ENCODE measurements at regions of chr11 and their contacts with region 1.

Region 1: DNA sequence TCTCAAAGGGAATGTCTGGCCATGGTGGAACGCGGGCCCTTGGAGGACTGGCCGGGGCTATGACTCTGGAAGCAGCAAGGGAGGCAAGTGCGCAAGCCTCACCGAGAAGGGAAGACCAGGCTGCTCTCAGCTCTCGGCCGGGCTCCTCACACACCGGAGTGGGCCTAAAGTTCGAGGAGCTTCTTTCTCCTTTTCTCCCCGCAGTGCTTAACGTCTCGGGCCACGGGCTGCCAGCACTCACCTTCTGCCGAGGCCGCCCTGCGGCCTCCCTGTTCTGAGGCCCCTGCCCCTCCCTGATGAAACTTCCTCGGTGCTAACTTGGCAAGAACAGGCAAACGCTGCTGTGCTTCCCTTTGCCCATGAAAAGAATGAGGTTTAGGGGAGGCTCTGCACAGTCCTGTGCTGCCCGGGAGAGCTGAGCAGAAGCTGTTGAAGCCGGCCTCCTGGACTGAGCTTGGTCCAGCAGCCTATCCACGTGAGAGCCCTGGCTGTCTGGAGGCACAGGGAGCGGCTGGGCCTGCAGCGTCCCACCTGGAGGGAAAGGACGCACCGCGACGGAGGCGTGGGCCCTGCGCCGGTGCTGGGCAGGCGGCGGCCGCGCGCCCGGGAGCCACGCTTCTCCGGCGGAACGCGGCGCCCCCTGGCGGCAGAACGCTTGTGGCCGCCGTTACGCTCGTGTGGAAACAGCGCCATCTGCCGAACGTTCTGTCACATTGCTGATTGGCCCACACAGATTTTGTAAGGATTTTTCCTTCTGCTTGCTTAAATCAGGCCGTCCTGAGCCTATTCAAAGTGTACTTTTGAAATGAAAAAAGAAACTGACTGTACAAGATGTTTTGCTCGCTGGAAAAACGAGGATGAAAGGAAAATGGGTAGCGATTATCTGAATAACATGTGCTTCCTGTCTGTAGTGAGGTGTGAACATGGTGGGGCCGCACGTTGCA is 65.0 kb upstream of the TMEM45B start:
- DNase-seq: peak; percentile 74
- H3K4me3 ChIP-seq: peak overlapping the region; percentile 23
- H3K27ac ChIP-seq: no peak overlapping the region
- H3K4me1 ChIP-seq: no peaks in the 10 kb centered on the region
- H3K27me3 ChIP-seq: peaks cover 2% of the 10 kb centered on the region
- CTCF ChIP-seq: peak; percentile 99

Region 2: GRCh38 chr11:128116885-128117284 is 1633.7 kb before region 1 on chr11:
- intact Hi-C with region 1: no loop called
- DNase-seq: no peak
- H3K4me3 ChIP-seq: no peak overlapping the region
- H3K27ac ChIP-seq: no peak overlapping the region
- H3K4me1 ChIP-seq: no peaks in the 10 kb centered on the region
- H3K27me3 ChIP-seq: no peaks in the 10 kb centered on the region
- CTCF ChIP-seq: no peak

Region 3: DNA sequence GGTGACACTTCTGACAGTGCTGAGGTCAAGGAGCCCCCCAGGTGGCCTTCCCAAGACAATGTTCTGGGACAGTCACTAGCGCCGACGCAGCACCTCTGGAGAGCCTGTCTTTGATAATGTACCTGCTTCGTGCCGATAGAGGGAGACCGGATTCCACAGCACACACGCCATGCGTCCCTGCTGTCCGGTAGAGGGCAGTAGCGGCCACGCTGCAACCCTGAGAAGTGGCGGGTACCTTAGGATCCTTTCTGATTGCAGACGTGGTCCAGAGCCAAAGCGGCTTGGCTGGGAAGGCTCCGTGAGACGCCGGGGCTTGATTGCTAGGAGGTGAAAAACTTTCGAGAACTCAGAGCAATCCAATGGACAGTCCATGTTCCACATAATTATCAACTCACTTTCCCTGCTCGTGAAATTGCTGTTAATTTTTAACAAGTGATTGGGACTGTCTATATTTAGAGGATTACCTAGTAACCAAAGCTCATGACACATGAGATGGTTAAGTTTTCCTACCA is 386.4 kb before region 1 on chr11:
- intact Hi-C with region 1: loop called (anchors 2 kb)
- DNase-seq: peak; percentile 90
- H3K4me3 ChIP-seq: no peak overlapping the region
- H3K27ac ChIP-seq: no peak overlapping the region
- H3K4me1 ChIP-seq: no peaks in the 10 kb centered on the region
- H3K27me3 ChIP-seq: no peaks in the 10 kb centered on the region
- CTCF ChIP-seq: peak; percentile 96

Region 4: GRCh38 chr11:129458756-129459535 is 291.7 kb before region 1 on chr11:
- intact Hi-C with region 1: no loop called
- DNase-seq: peak; percentile 35
- H3K4me3 ChIP-seq: no peak overlapping the region
- H3K27ac ChIP-seq: no peak overlapping the region
- H3K4me1 ChIP-seq: no peaks in the 10 kb centered on the region
- H3K27me3 ChIP-seq: no peaks in the 10 kb centered on the region
- CTCF ChIP-seq: no peak

Region 5: DNA sequence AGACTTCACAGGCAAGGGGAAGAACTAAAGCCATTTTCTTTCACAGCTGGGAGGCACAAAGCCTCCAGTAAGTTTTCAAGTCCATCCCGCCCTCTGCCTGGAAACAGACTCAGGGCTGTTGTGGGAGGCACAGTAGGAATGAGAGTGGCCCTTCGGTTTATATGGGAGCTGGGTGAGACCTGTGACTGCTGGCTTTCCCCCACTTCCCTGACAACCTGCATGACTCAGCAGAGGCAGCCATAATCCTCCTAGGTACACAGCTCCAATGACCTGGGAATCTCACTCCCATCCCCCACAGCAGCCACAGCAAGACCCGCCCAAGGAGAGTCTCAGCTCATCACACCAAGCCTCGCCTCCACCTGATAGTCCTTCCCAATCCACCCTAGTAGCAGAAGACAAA is 52.9 kb after region 1 on chr11:
- intact Hi-C with region 1: no loop called
- DNase-seq: peak; percentile 85
- H3K4me3 ChIP-seq: no peak overlapping the region
- H3K27ac ChIP-seq: peak overlapping the region; percentile 58
- H3K4me1 ChIP-seq: no peaks in the 10 kb centered on the region
- H3K27me3 ChIP-seq: no peaks in the 10 kb centered on the region
- CTCF ChIP-seq: no peak

Measured in colonic mucosa (tissue), 4 donors.